Pancreas (tissue), 10 donors: ENCODE measurements at regions of chr13 and their contacts with region 1.

Region 1: DNA sequence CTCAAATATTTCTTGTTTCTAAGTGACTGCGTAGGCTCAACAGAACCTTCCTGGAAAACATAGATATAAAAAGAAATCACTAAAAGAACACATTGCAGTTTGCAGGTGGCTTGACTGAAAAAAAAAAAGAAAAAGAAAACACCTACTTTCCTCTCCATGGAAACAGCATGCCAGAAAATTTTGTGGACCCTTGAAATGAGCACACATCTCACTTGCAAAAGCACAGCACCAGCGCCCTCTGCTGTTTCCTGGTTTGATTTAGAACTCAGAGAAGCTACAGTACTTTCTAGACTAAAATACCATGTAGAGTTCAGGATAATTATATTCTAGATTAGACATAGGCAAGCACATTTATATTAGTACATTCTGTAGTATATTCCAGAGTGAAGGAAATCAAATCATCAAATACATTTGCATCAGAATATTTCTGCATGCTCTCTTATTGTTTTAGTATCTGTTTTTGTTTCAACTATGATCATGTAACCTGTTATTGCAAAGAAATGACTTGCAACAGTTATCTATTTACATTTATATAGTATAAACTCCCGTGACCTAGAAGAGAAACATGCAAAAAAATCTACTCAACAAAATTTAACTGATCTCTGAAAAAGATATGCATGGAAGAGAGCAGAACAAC is 22.3 kb upstream of the XPO4 start:
- DNase-seq: peak in 5 of 6 donors; percentile 39 to 80 (median 71)
- ATAC-seq: peak in 3 of 4 donors; percentile 59 to 81 (median 78)
- H3K4me3 ChIP-seq: no peak overlapping the region
- H3K27ac ChIP-seq: no peak overlapping the region
- H3K4me1 ChIP-seq: no peaks in the 10 kb centered on the region
- H3K27me3 ChIP-seq: no peaks in the 10 kb centered on the region
- CTCF ChIP-seq: peak in 3 of 4 donors; percentile 34 to 70 (median 59)

Region 2: GRCh38 chr13:20182231-20182846 is 742.5 kb before region 1 on chr13:
- intact Hi-C with region 1: loop called in 1 of 3 experiments (anchors 10 kb)
- DNase-seq: peak in 3 of 6 donors; percentile 22 to 52 (median 31)
- ATAC-seq: peak; percentile 88 to 99 (median 96)
- H3K4me3 ChIP-seq: no peak overlapping the region
- H3K27ac ChIP-seq: no peak overlapping the region
- H3K4me1 ChIP-seq: no peaks in the 10 kb centered on the region
- H3K27me3 ChIP-seq: peaks cover 0 to 5% (median 4%) of the 10 kb centered on the region in 4 donors
- CTCF ChIP-seq: peak; percentile 57 to 78 (median 70)

Region 3: DNA sequence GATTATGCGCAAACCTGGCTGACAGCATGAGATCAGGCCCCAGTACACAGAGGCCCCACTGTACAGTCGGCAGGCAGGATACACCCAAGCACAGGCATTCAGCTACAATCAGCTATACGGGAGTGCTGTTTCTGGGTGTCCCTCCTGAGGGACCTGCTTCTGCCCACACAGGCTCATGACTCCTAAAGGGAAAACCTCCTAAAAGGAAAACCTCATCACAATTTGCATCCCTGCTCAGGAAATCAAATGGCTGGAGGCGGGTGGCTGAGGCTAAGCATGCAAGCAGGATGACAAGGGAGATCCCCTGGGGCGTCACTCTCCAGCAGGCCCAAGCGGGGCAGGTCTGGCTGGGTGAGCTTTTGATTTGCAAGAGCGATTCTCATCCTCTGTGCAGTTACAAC is 499.1 kb before region 1 on chr13:
- intact Hi-C with region 1: no loop called
- DNase-seq: no peak
- ATAC-seq: no peak
- H3K4me3 ChIP-seq: no peak overlapping the region
- H3K27ac ChIP-seq: no peak overlapping the region
- H3K4me1 ChIP-seq: no peaks in the 10 kb centered on the region
- H3K27me3 ChIP-seq: no peaks in the 10 kb centered on the region
- CTCF ChIP-seq: no peak

Region 4: GRCh38 chr13:20495082-20496023 is 429.5 kb before region 1 on chr13:
- intact Hi-C with region 1: loop called in 1 of 3 experiments (anchors 5 kb)
- DNase-seq: peak in 3 of 6 donors; percentile 30 to 70 (median 33)
- ATAC-seq: peak; percentile 82 to 98 (median 95)
- H3K4me3 ChIP-seq: peak overlapping the region in 1 of 4 donors; percentile 25
- H3K27ac ChIP-seq: no peak overlapping the region
- H3K4me1 ChIP-seq: no peaks in the 10 kb centered on the region
- H3K27me3 ChIP-seq: no peaks in the 10 kb centered on the region
- CTCF ChIP-seq: peak; percentile 83 to 95 (median 90)

Region 5: GRCh38 chr13:20713751-20714150 is 211.1 kb before region 1 on chr13:
- intact Hi-C with region 1: loop called in 1 of 3 experiments (anchors 10 kb)
- DNase-seq: no peak
- ATAC-seq: peak in 1 of 4 donors; percentile 20
- H3K4me3 ChIP-seq: no peak overlapping the region
- H3K27ac ChIP-seq: no peak overlapping the region
- H3K4me1 ChIP-seq: no peaks in the 10 kb centered on the region
- H3K27me3 ChIP-seq: no peaks in the 10 kb centered on the region
- CTCF ChIP-seq: no peak

Region 6: DNA sequence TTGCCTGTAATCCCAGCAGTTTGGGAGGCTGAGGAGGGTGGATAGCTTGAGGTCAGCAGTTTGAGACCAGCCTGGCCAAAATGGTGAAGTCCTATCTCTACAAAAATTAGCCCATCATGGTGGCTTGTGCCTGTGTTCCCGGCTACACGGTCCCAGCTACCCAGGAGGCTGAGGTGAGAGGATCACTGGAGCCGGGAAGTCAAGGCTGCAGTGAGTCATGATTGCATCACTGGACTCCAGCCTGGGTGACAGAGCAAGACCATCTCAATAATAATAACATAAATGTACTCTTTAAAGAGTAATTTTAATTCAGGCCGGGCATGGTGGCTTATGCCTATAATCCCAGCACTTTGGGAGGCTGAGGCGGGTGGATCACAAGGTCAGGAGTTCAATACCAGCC is 212.8 kb after region 1 on chr13:
- intact Hi-C with region 1: no loop called
- DNase-seq: no peak
- ATAC-seq: no peak
- H3K4me3 ChIP-seq: no peak overlapping the region
- H3K27ac ChIP-seq: no peak overlapping the region
- H3K4me1 ChIP-seq: peaks cover 6 to 20% (median 14%) of the 10 kb centered on the region in 3 donors
- H3K27me3 ChIP-seq: no peaks in the 10 kb centered on the region
- CTCF ChIP-seq: no peak